Activated CD8-positive, alpha-beta T cell treated with anti-CD3 and anti-CD28 coated beads for 36 hours (primary cell): ENCODE measurements at regions of chr1 and their contacts with region 1.

Region 1: DNA sequence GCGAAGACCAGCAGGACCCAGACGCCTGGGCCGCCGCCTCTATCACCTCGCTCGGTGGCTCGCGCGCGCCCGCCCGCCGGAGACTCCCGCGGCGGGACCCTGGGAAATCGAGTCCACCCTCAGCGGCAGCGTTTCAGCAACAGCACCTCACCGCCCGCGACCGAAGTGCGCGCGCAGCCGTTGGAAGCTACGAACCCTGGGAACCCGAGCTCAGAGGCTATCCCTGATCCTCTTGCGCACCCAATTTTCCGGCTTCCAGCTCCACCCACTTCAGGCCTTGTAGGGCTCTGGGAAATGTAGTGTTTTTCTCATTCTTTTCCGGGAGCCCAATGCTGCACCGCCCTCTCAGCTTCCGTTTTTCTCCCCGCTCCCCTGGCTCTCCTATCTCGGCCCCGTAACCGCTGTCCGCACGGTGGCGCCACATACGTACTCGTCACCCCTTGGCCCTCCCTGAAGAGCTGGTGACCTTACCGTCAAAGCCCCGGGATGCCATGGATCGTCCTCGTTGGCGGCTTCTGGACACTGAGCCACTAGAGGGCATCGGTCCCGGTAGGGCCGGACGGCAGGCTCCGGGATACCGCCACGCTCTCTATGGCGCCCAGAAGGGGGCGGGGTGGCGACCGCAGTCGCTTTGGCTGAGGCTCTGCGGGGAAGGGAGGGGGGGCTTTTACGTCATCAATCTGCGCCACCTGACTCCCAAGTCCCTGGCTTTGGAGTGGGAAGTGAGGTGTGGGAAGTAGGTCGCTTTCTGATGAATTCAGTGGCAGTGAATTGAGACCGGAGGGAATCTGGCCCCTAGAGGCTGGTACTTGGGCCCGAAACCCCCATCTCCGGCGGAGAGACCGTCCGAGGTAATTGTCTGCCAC is at the starts of genes ODR4 and TPR:
- DNase-seq: peak; percentile 98
- ATAC-seq: peak; percentile 84
- H3K4me3 Mint-ChIP-seq: peak within 1 kb of the TSS; percentile 99
- H3K27ac Mint-ChIP-seq: peak within 1 kb of the TSS; percentile 97
- H3K4me1 Mint-ChIP-seq: peaks cover 37% of the 10 kb centered on the region
- H3K27me3 Mint-ChIP-seq: no peaks in the 10 kb centered on the region
- CTCF ChIP-seq: peak; percentile 68
- total RNA-seq, gene ODR4: 13.4 to 13.6 TPM
- total RNA-seq, gene TPR: 120 to 139 TPM

Region 2: DNA sequence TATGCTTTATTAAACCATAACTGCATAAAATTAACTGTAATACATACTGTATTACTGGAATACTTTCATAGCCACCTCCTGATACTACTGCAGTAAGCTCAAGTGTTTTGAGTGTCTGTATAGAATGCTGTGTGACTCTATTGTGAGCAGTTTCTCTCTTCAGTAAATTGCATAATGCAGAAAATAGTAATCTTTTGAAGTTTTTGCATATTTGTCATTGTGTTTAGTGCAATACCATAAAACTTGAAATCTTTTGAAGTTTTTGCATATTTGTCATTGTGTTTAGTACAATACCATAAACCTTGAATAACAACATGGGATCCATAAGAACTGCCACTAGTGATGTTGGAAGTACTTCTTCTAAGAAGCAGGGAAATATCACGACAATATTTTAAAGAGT is 11.4 kb before region 1 on chr1:
- CTCF ChIA-PET with region 1: interaction called, 15 read pairs
- POLR2A ChIA-PET with region 1: interaction called, 3 read pairs
- intact Hi-C with region 1: no loop called
- DNase-seq: no peak
- ATAC-seq: no peak
- H3K4me3 Mint-ChIP-seq: no peak overlapping the region
- H3K27ac Mint-ChIP-seq: no peak overlapping the region
- H3K4me1 Mint-ChIP-seq: peaks cover 15% of the 10 kb centered on the region
- H3K27me3 Mint-ChIP-seq: no peaks in the 10 kb centered on the region
- CTCF ChIP-seq: no peak

Region 3: GRCh38 chr1:186386725-186387383 is 11.5 kb after region 1 on chr1:
- CTCF ChIA-PET with region 1: interaction called, 10 read pairs
- POLR2A ChIA-PET with region 1: interaction called, 11 read pairs
- intact Hi-C with region 1: no loop called
- DNase-seq: no peak
- ATAC-seq: no peak
- H3K4me3 Mint-ChIP-seq: no peak overlapping the region
- H3K27ac Mint-ChIP-seq: no peak overlapping the region
- H3K4me1 Mint-ChIP-seq: peaks cover 1% of the 10 kb centered on the region
- H3K27me3 Mint-ChIP-seq: no peaks in the 10 kb centered on the region
- CTCF ChIP-seq: no peak